Activated CD4-positive, alpha-beta memory T cell treated with anti-CD3 and anti-CD28 coated beads for 36 hours (primary cell): ENCODE measurements at regions of chr11 and their contacts with region 1.

Region 1: GRCh38 chr11:2151500-2152257 is 9.3 kb downstream of the INS start:
- DNase-seq: peak; percentile 86
- H3K4me3 Mint-ChIP-seq: no peak overlapping the region
- H3K27ac Mint-ChIP-seq: no peak overlapping the region
- H3K4me1 Mint-ChIP-seq: peaks cover 5% of the 10 kb centered on the region
- H3K27me3 Mint-ChIP-seq: peaks cover 32% of the 10 kb centered on the region

Region 2: GRCh38 chr11:1652771-1653540 is 498.7 kb before region 1 on chr11:
- CTCF ChIA-PET with region 1: interaction called, 37 read pairs
- POLR2A ChIA-PET with region 1: no interaction called
- intact Hi-C with region 1: no loop called
- DNase-seq: peak; percentile 79
- H3K4me3 Mint-ChIP-seq: no peak overlapping the region
- H3K27ac Mint-ChIP-seq: no peak overlapping the region
- H3K4me1 Mint-ChIP-seq: no peaks in the 10 kb centered on the region
- H3K27me3 Mint-ChIP-seq: peaks cover 20% of the 10 kb centered on the region

Region 3: DNA sequence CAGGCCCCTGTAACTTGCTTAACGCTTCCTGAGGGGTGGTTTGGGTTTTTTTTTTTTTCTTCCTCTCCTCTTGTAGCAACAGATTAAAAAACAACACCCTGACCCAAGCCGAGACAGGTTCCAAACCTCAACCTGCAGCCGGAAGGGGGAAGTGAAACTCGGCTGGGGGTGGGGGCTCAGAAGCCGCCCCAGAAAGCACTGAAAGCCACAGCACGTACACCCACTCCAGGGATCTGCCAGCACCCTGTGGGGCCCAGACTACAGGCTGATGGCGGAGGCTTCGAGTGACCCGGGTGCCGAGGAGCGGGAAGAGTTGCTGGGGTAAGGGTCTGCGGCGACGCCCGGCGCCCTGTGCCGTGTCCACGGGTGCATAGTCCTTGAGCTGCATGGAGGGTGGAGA is 298.8 kb before region 1 on chr11 and contains the start of gene LSP1:
- CTCF ChIA-PET with region 1: interaction called, 18 read pairs
- POLR2A ChIA-PET with region 1: no interaction called
- intact Hi-C with region 1: no loop called
- DNase-seq: peak; percentile 93
- H3K4me3 Mint-ChIP-seq: peak within 1 kb of the TSS; percentile 92
- H3K27ac Mint-ChIP-seq: peak within 1 kb of the TSS; percentile 97
- H3K4me1 Mint-ChIP-seq: peaks cover 66% of the 10 kb centered on the region
- H3K27me3 Mint-ChIP-seq: no peaks in the 10 kb centered on the region
- total RNA-seq, gene LSP1: 179 to 181 TPM

Region 4: GRCh38 chr11:1943977-1944376 is 207.7 kb before region 1 on chr11:
- CTCF ChIA-PET with region 1: interaction called, 41 read pairs
- POLR2A ChIA-PET with region 1: no interaction called
- intact Hi-C with region 1: no loop called
- DNase-seq: no peak
- H3K4me3 Mint-ChIP-seq: no peak overlapping the region
- H3K27ac Mint-ChIP-seq: no peak overlapping the region
- H3K4me1 Mint-ChIP-seq: peaks cover 3% of the 10 kb centered on the region
- H3K27me3 Mint-ChIP-seq: no peaks in the 10 kb centered on the region

Region 5: GRCh38 chr11:2027708-2028107 is 124.0 kb before region 1 on chr11:
- CTCF ChIA-PET with region 1: interaction called, 738 read pairs
- POLR2A ChIA-PET with region 1: no interaction called
- intact Hi-C with region 1: no loop called
- DNase-seq: no peak
- H3K4me3 Mint-ChIP-seq: no peak overlapping the region
- H3K27ac Mint-ChIP-seq: no peak overlapping the region
- H3K4me1 Mint-ChIP-seq: no peaks in the 10 kb centered on the region
- H3K27me3 Mint-ChIP-seq: no peaks in the 10 kb centered on the region

Region 6: GRCh38 chr11:2166091-2166851 is 14.6 kb after region 1 on chr11:
- CTCF ChIA-PET with region 1: interaction called, 15 read pairs
- POLR2A ChIA-PET with region 1: no interaction called
- intact Hi-C with region 1: no loop called
- DNase-seq: peak; percentile 56
- H3K4me3 Mint-ChIP-seq: no peak overlapping the region
- H3K27ac Mint-ChIP-seq: no peak overlapping the region
- H3K4me1 Mint-ChIP-seq: no peaks in the 10 kb centered on the region
- H3K27me3 Mint-ChIP-seq: peaks cover 7% of the 10 kb centered on the region